Activated T-helper 1 cell treated with anti-CD3 and anti-CD28 coated beads, Interleukin-12 subunit alpha, Interleukin-12 subunit beta, Interleukin-2, Interleukin-4 antibody, amounts not matched to agents 30 ng/mL and 10 ng/mL and 1 ng/mL, durations not matched to agents 14 hours and 24 hours and 36 hours (primary cell): ENCODE measurements at regions of chr22 and their contacts with region 1.

Region 1: GRCh38 chr22:37849089-37849751 is at the start of gene EIF3L:
- DNase-seq: peak; percentile 89
- H3K4me3 Mint-ChIP-seq: peak within 1 kb of the TSS; percentile 97
- H3K27ac Mint-ChIP-seq: peak within 1 kb of the TSS; percentile 96
- H3K4me1 Mint-ChIP-seq: peaks cover 49% of the 10 kb centered on the region
- H3K27me3 Mint-ChIP-seq: no peaks in the 10 kb centered on the region
- total RNA-seq, gene EIF3L: 433 and 441 TPM in 2 replicates

Region 2: GRCh38 chr22:37745548-37746365 is 103.5 kb before region 1 on chr22:
- intact Hi-C with region 1: loop called (anchors 1 kb)
- DNase-seq: peak; percentile 85
- H3K4me3 Mint-ChIP-seq: peak overlapping the region; percentile 83
- H3K27ac Mint-ChIP-seq: peak overlapping the region; percentile 74
- H3K4me1 Mint-ChIP-seq: peaks cover 25% of the 10 kb centered on the region
- H3K27me3 Mint-ChIP-seq: no peaks in the 10 kb centered on the region

Region 3: GRCh38 chr22:37817705-37818408 is 31.4 kb before region 1 on chr22:
- intact Hi-C with region 1: loop called (anchors 1 kb)
- DNase-seq: peak; percentile 74
- H3K4me3 Mint-ChIP-seq: peak overlapping the region; percentile 45
- H3K27ac Mint-ChIP-seq: no peak overlapping the region
- H3K4me1 Mint-ChIP-seq: peaks cover 12% of the 10 kb centered on the region
- H3K27me3 Mint-ChIP-seq: peaks cover 29% of the 10 kb centered on the region

Region 4: GRCh38 chr22:37896181-37896592 is 47.0 kb after region 1 on chr22:
- intact Hi-C with region 1: loop called (anchors 1 kb)
- DNase-seq: peak; percentile 52
- H3K4me3 Mint-ChIP-seq: peak overlapping the region; percentile 30
- H3K27ac Mint-ChIP-seq: peak overlapping the region; percentile 89
- H3K4me1 Mint-ChIP-seq: peaks cover 25% of the 10 kb centered on the region
- H3K27me3 Mint-ChIP-seq: no peaks in the 10 kb centered on the region

Region 5: GRCh38 chr22:37933711-37934376 is 84.6 kb after region 1 on chr22:
- intact Hi-C with region 1: no loop called
- DNase-seq: peak; percentile 78
- H3K4me3 Mint-ChIP-seq: no peak overlapping the region
- H3K27ac Mint-ChIP-seq: peak overlapping the region; percentile 34
- H3K4me1 Mint-ChIP-seq: peaks cover 11% of the 10 kb centered on the region
- H3K27me3 Mint-ChIP-seq: no peaks in the 10 kb centered on the region

Region 6: GRCh38 chr22:37959231-37959825 is 110.1 kb after region 1 on chr22:
- intact Hi-C with region 1: no loop called
- DNase-seq: no peak
- H3K4me3 Mint-ChIP-seq: no peak overlapping the region
- H3K27ac Mint-ChIP-seq: no peak overlapping the region
- H3K4me1 Mint-ChIP-seq: peaks cover 9% of the 10 kb centered on the region
- H3K27me3 Mint-ChIP-seq: no peaks in the 10 kb centered on the region

Region 7: GRCh38 chr22:38181453-38182247 is 332.4 kb after region 1 on chr22 and contains the start of gene PLA2G6:
- intact Hi-C with region 1: loop called (anchors 2 kb)
- DNase-seq: peak; percentile 99
- H3K4me3 Mint-ChIP-seq: peak within 1 kb of the TSS; percentile 89
- H3K27ac Mint-ChIP-seq: peak within 1 kb of the TSS; percentile 95
- H3K4me1 Mint-ChIP-seq: peaks cover 48% of the 10 kb centered on the region
- H3K27me3 Mint-ChIP-seq: peaks cover 10% of the 10 kb centered on the region
- total RNA-seq, gene PLA2G6: 34.8 and 34.9 TPM in 2 replicates